Vagina (tissue), 2 donors: ENCODE measurements at regions of chr21 and their contacts with region 1.

Region 1: DNA sequence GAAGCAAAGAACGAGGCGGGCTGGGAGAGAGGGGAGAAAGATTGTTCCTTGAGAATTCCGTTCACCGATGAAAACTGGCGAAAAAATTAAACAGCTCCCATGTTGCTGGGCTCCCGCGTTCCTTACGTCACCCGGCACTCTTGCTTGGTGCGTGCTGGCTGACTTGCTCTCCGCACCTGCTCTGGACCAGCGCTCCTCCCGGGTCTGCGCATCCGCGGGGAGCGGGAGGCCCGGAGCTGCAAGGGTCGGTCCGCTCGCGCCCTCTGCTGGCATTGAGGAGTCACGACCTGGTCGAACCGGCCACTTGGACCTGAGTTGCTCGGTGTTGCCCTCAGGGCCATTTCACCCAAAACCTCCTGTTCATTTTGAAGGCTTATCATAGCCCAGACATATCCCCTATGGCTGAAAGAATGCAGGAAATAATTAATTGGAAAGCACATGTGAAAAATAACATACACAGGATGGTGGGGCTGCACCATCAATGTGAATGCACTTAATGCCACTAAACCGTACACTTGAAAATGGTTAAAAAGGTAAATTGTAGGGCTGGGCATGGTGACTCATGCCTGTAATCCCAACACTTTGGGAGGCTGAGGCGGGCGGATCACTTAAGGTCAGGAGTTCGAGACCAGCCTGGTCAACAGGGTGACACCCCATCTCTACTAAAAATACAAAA is 98.9 kb upstream of the BACE2 start:
- DNase-seq: peak in 1 of 2 donors; percentile 81
- H3K4me3 ChIP-seq: no peak overlapping the region
- H3K27ac ChIP-seq: no peak overlapping the region
- H3K4me1 ChIP-seq: no peaks in the 10 kb centered on the region
- H3K27me3 ChIP-seq: no peaks in the 10 kb centered on the region
- CTCF ChIP-seq: peak in 2 of 3 experiments; percentile 12 to 47
- POLR2A ChIP-seq: no peak

Region 2: GRCh38 chr21:40143822-40144525 is 925.1 kb before region 1 on chr21:
- intact Hi-C with region 1: loop called (anchors 10 kb)
- DNase-seq: no peak
- H3K4me3 ChIP-seq: no peak overlapping the region
- H3K27ac ChIP-seq: no peak overlapping the region
- H3K4me1 ChIP-seq: no peaks in the 10 kb centered on the region
- H3K27me3 ChIP-seq: no peaks in the 10 kb centered on the region
- CTCF ChIP-seq: peak; percentile 49 to 73 (median 63)
- POLR2A ChIP-seq: no peak

Region 3: DNA sequence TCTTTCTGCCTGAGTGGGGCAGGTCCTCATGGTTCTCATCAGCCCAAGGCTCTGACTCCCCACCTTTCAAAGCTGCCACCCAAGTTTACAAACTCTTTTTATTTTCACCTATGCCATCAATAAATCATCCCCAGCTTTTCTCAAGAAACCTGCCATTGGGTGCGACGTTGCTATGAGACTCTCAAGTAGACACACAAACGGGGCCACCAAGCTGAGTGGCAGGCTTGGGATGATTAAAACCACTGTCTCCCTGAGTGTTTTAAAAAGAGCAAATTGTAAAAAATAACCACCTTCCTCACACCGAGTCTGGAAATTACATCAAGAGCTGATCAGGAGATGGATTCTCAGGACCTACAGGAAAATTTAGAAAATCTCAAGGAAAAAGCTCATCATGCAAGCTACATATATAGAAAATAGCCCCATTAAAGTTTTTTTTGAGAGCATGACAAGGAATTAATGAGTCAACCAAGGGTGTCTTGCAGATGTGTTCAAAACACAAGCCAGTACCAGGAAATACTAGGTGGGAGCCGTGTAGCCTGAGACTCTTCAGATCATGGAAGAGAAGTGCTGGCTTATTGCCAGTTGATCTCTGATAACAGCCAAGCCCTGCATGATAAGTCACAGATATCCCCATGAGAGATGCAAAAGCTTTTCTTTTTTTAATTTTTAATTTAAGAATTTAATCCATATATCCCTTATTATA is 59.6 kb before region 1 on chr21:
- intact Hi-C with region 1: no loop called
- DNase-seq: no peak
- H3K4me3 ChIP-seq: no peak overlapping the region
- H3K27ac ChIP-seq: no peak overlapping the region
- H3K4me1 ChIP-seq: no peaks in the 10 kb centered on the region
- H3K27me3 ChIP-seq: no peaks in the 10 kb centered on the region
- CTCF ChIP-seq: no peak
- POLR2A ChIP-seq: no peak